ENCODE measurements at regions of chr5 and their contacts with region 1.

Region 1: DNA sequence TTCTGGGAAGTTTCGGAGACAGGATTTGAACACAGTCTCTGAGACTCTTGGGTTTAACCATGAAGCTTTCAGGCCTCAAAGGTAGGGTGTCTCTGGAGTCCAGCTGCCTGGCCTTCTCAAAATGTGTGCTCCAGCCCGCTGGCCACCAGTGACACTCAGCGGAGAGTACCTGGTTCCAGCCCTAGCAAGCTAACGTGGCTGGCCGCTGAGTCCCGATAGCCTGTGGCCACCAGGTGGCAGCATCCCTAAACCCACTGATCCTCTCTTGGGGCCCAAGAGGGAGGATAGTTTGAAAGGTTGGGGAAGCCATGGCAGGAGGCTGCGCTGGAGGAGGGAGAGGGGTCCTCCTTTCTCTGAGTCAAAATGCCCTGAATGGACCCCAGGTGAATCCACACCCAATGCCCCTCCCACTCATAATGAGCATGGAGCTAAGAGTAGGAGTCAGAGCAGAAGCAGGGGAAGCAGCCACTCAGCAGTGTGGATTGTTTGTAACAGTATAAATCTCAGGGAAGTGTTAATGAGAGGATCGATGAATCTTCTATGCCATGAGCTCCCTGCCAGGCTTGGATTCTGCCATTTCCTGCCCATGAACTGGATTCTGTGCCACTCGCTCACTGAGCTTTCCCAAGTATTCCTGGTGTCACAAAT is 5.4 kb upstream of the TIFAB start:
- DNase-seq: peak; percentile 77
- CTCF ChIP-seq: peak; percentile 97

Region 2: GRCh38 chr5:135402031-135402430 is 55.5 kb before region 1 on chr5:
- in situ Hi-C with region 1: no loop called
- DNase-seq: no peak
- CTCF ChIP-seq: no peak

Region 3: GRCh38 chr5:135560858-135561257 is 103.3 kb after region 1 on chr5:
- in situ Hi-C with region 1: loop called (anchors 5 kb)
- DNase-seq: peak; percentile 80
- CTCF ChIP-seq: peak; percentile 83